ENCODE measurements at regions of chr5 and their contacts with region 1.

Region 1: GRCh38 chr5:77129391-77129990 is 42.4 kb upstream of the ZBED3 start:
- DNase-seq: peak; percentile 16
- ATAC-seq: peak; percentile 79
- H3K4me3 ChIP-seq: no peak overlapping the region
- H3K27ac ChIP-seq: no peak overlapping the region
- H3K4me1 ChIP-seq: peaks cover 0 to 13% of the 10 kb centered on the region in 2 experiments; a peak in 2 of 4 replicates
- H3K27me3 ChIP-seq: no peaks in the 10 kb centered on the region
- CTCF ChIP-seq: peak in 2 of 3 experiments; percentile 63 to 73; a peak in 4 of 6 replicates
- POLR2A ChIP-seq: no peak
- RAD21 ChIP-seq: peak; percentile 49

Region 2: GRCh38 chr5:76040806-76041205 is 1088.7 kb before region 1 on chr5:
- CTCF ChIA-PET with region 1: no interaction called
- POLR2A ChIA-PET with region 1: no interaction called
- RAD21 ChIA-PET with region 1: no interaction called
- intact Hi-C with region 1: no loop called
- DNase-seq: no peak
- ATAC-seq: no peak
- H3K4me3 ChIP-seq: no peak overlapping the region
- H3K27ac ChIP-seq: no peak overlapping the region
- H3K4me1 ChIP-seq: no peaks in the 10 kb centered on the region
- H3K27me3 ChIP-seq: peaks cover 30% of the 10 kb centered on the region
- CTCF ChIP-seq: no peak
- POLR2A ChIP-seq: no peak
- RAD21 ChIP-seq: no peak

Region 3: GRCh38 chr5:77491783-77492652 is 362.5 kb after region 1 on chr5 and contains the start of gene WDR41:
- CTCF ChIA-PET with region 1: interaction called, 3 read pairs
- POLR2A ChIA-PET with region 1: no interaction called
- RAD21 ChIA-PET with region 1: no interaction called
- intact Hi-C with region 1: loop called (anchors 1 kb)
- DNase-seq: peak; percentile 85
- ATAC-seq: peak; percentile 94
- H3K4me3 ChIP-seq: peak within 1 kb of the TSS; percentile 73 to 78
- H3K27ac ChIP-seq: peak within 1 kb of the TSS; percentile 91
- H3K4me1 ChIP-seq: peaks cover 7 to 11% of the 10 kb centered on the region in 2 experiments; a peak in 3 of 4 replicates
- H3K27me3 ChIP-seq: no peaks in the 10 kb centered on the region
- CTCF ChIP-seq: peak; percentile 41 to 87 (median 81); a peak in 5 of 6 replicates
- POLR2A ChIP-seq: peak; percentile 39
- RAD21 ChIP-seq: peak; percentile 67
- total RNA-seq, gene WDR41: 54.1 TPM

Measured in HCT116 (cell line).